CD4-positive, alpha-beta memory T cell (primary cell): ENCODE measurements at regions of chr16 and their contacts with region 1.

Region 1: GRCh38 chr16:81035398-81035974 is at the start of gene ATMIN:
- DNase-seq: peak; percentile 81 to 91 (median 89)
- H3K4me3 ChIP-seq: peak within 1 kb of the TSS; percentile 56 to 68
- H3K4me3 Mint-ChIP-seq: peak within 1 kb of the TSS; percentile 83 to 91 (median 88)
- H3K27ac ChIP-seq: peak within 1 kb of the TSS; percentile 50
- H3K27ac Mint-ChIP-seq: peak within 1 kb of the TSS; percentile 68 to 89 (median 85)
- H3K4me1 ChIP-seq: peaks cover 29% of the 10 kb centered on the region
- H3K4me1 Mint-ChIP-seq: peaks cover 18 to 42% (median 28%) of the 10 kb centered on the region in 4 donors
- H3K27me3 ChIP-seq: no peaks in the 10 kb centered on the region
- H3K27me3 Mint-ChIP-seq: no peaks in the 10 kb centered on the region
- total RNA-seq, gene ATMIN: 39.3 to 45.4 TPM

Region 2: DNA sequence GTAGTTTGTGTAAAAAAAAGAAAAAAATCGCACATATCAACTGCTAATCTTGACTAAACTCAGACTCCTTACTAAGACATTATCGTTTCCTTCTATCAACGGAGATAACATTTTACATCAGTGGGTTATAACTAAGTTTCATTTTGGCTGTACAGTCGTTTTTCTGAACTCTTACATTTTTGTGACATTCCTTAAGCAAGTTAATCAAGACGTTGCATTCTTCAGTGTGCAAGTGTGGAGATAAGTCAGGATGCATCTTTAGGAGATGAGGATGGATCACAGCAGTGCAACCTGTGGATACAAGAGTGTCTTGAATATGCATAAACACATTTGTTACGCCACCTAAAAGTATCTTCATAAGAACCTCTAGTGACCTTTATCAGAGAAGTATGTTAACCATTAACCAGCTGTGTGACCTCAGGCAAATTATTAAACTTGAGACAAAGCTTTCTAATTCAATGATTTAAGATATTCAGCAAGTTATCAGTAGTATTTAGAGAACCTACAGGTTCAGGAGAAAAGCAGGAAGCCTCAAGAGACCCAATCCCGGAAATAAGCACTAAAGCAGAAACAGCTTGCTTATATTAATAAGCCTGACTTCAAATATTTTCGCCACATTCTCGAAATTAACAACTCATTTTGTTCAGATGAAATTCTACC is 38.2 kb before region 1 on chr16:
- CTCF ChIA-PET with region 1: interaction called, 91 read pairs
- POLR2A ChIA-PET with region 1: interaction called, 10 read pairs
- intact Hi-C with region 1: no loop called
- DNase-seq: peak in 4 of 5 donors; percentile 15 to 29 (median 24)
- H3K4me3 ChIP-seq: peak overlapping the region; percentile 36 to 70
- H3K4me3 Mint-ChIP-seq: peak overlapping the region; percentile 91 to 98 (median 96)
- H3K27ac ChIP-seq: peak overlapping the region; percentile 63
- H3K27ac Mint-ChIP-seq: peak overlapping the region; percentile 93 to 98 (median 94)
- H3K4me1 ChIP-seq: peaks cover 35% of the 10 kb centered on the region
- H3K4me1 Mint-ChIP-seq: peaks cover 21 to 67% (median 56%) of the 10 kb centered on the region in 4 donors
- H3K27me3 ChIP-seq: no peaks in the 10 kb centered on the region
- H3K27me3 Mint-ChIP-seq: no peaks in the 10 kb centered on the region

Region 3: GRCh38 chr16:81071816-81072215 is 36.3 kb after region 1 on chr16:
- CTCF ChIA-PET with region 1: interaction called, 48 read pairs
- POLR2A ChIA-PET with region 1: interaction called, 37 read pairs
- intact Hi-C with region 1: loop called (anchors 1 kb)
- DNase-seq: no peak
- H3K4me3 ChIP-seq: no peak overlapping the region
- H3K4me3 Mint-ChIP-seq: no peak overlapping the region
- H3K27ac ChIP-seq: no peak overlapping the region
- H3K27ac Mint-ChIP-seq: no peak overlapping the region
- H3K4me1 ChIP-seq: peaks cover 6% of the 10 kb centered on the region
- H3K4me1 Mint-ChIP-seq: peaks cover 0 to 1% (median 0%) of the 10 kb centered on the region in 4 donors
- H3K27me3 ChIP-seq: no peaks in the 10 kb centered on the region
- H3K27me3 Mint-ChIP-seq: peaks cover 0 to 2% of the 10 kb centered on the region in 2 donors

Region 4: DNA sequence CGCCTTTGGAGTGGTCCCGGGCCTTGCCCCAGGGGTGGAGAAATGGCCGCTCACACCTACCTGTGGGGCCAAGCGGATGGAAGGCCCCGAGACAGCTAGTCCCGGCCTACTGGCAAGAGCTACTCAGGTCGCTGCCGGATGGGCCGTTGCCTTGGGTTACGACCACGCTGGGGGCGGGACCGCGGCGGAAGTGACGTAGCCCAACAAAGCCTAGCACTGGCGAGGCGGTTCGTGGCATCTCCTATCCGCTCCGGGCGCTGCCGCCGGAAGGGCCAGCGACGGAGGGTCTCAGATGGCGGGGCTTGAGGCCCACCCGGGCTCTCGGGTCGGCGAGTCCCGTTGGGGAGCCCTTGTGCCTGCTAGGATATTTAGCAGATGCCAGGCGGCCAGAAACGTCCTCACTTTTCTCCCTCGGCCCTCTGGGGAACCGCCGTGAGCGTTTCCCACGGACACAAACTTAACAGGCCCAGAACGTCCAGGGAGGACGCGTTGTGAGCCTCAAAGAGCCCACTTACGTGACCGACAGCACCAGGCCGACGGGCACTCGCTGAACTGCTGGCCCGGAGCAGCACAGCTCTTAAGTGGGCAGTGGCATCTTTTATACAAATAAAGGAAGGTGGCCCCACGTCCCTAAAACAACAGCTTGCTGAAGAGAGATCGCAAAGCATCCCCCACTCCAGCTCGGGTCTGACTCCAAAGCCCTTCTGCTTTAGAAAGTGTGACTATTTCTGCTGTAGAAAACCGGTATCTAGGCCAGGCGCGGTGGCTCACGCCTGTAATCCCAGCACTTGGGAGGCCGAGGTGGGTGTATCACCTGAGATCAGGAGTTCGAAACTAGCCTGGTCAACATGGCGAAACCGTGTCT is 41.8 kb after region 1 on chr16 and contains the start of gene C16orf46:
- CTCF ChIA-PET with region 1: interaction called, 48 read pairs
- POLR2A ChIA-PET with region 1: interaction called, 37 read pairs
- intact Hi-C with region 1: loop called (anchors 1 kb)
- DNase-seq: peak; percentile 96 to 99 (median 96)
- H3K4me3 ChIP-seq: peak within 1 kb of the TSS; percentile 59 to 75
- H3K4me3 Mint-ChIP-seq: peak within 1 kb of the TSS in 1 of 8 donors; percentile 20
- H3K27ac ChIP-seq: peak within 1 kb of the TSS; percentile 95
- H3K27ac Mint-ChIP-seq: peak within 1 kb of the TSS in 2 of 7 donors; percentile 25 to 66
- H3K4me1 ChIP-seq: peaks cover 13% of the 10 kb centered on the region
- H3K4me1 Mint-ChIP-seq: peaks cover 0 to 4% (median 1%) of the 10 kb centered on the region in 4 donors
- H3K27me3 ChIP-seq: no peaks in the 10 kb centered on the region
- H3K27me3 Mint-ChIP-seq: no peaks in the 10 kb centered on the region
- total RNA-seq, gene C16orf46: 0.29 TPM in 1 of 2 experiments, not detected in the other

Region 5: GRCh38 chr16:81095953-81096717 is 60.6 kb after region 1 on chr16 and contains the start of gene GCSH:
- CTCF ChIA-PET with region 1: interaction called, 5 read pairs
- POLR2A ChIA-PET with region 1: no interaction called
- intact Hi-C with region 1: loop called (anchors 1 kb)
- DNase-seq: peak; percentile 97 to 99 (median 99)
- H3K4me3 ChIP-seq: peak within 1 kb of the TSS; percentile 69 to 73
- H3K4me3 Mint-ChIP-seq: peak within 1 kb of the TSS; percentile 67 to 90 (median 85)
- H3K27ac ChIP-seq: peak within 1 kb of the TSS; percentile 37
- H3K27ac Mint-ChIP-seq: peak within 1 kb of the TSS; percentile 18 to 83 (median 48)
- H3K4me1 ChIP-seq: peaks cover 11% of the 10 kb centered on the region
- H3K4me1 Mint-ChIP-seq: peaks cover 4 to 17% (median 5%) of the 10 kb centered on the region in 4 donors
- H3K27me3 ChIP-seq: no peaks in the 10 kb centered on the region
- H3K27me3 Mint-ChIP-seq: no peaks in the 10 kb centered on the region
- total RNA-seq, gene GCSH: 3.5 to 4.9 TPM